ENCODE measurements at regions of chr3 and their contacts with region 1.

Region 1: GRCh38 chr3:49454458-49454857 is 15.6 kb upstream of the DAG1 start:
- DNase-seq: peak in 1 of 2 experiments; percentile 50
- ATAC-seq: peak; percentile 85 to 89
- H3K4me3 ChIP-seq: no peak overlapping the region
- H3K27ac ChIP-seq: peak overlapping the region in 1 of 2 experiments; percentile 8; a peak in 1 of 6 replicates
- H3K4me1 ChIP-seq: peaks cover 15% of the 10 kb centered on the region
- CTCF ChIP-seq: peak; percentile 30; the same call in 1 of the 3 replicates
- EP300 ChIP-seq: no peak
- POLR2A ChIP-seq: no peak
- RAD21 ChIP-seq: peak; percentile 55 to 66

Region 2: GRCh38 chr3:49171119-49171774 is 283.2 kb before region 1 on chr3 and contains the start of gene KLHDC8B:
- CTCF ChIA-PET with region 1: interaction called, 20 read pairs
- POLR2A ChIA-PET with region 1: no interaction called
- DNase-seq: peak; percentile 73 to 76
- ATAC-seq: peak; percentile 83 to 93
- H3K4me3 ChIP-seq: peak within 1 kb of the TSS; percentile 66
- H3K27ac ChIP-seq: peak within 1 kb of the TSS; percentile 81 to 87
- H3K4me1 ChIP-seq: peaks cover 25% of the 10 kb centered on the region
- CTCF ChIP-seq: peak; percentile 85
- EP300 ChIP-seq: no peak
- POLR2A ChIP-seq: peak; percentile 39; the same call in 1 of the 2 replicates
- RAD21 ChIP-seq: peak; percentile 66 to 80
- polyA plus RNA-seq, gene KLHDC8B: 6.7 and 7.4 TPM in 2 replicates

Region 3: GRCh38 chr3:49411968-49412631 is 42.4 kb before region 1 on chr3 and contains the starts of genes RHOA and TCTA:
- CTCF ChIA-PET with region 1: interaction called, 11 read pairs
- POLR2A ChIA-PET with region 1: interaction called, 3 read pairs
- DNase-seq: peak; percentile 95 to 100
- ATAC-seq: peak; percentile 87 to 92
- H3K4me3 ChIP-seq: peak within 1 kb of the TSS; percentile 98
- H3K27ac ChIP-seq: peak within 1 kb of the TSS; percentile 98 to 99
- H3K4me1 ChIP-seq: peaks cover 37% of the 10 kb centered on the region
- CTCF ChIP-seq: no peak
- EP300 ChIP-seq: no peak
- POLR2A ChIP-seq: peak; percentile 89
- RAD21 ChIP-seq: no peak
- polyA plus RNA-seq, gene RHOA: 332 and 343 TPM in 2 replicates
- polyA plus RNA-seq, gene TCTA: 14.8 and 19.9 TPM in 2 replicates

Region 4: GRCh38 chr3:49421890-49422378 is 32.5 kb before region 1 on chr3:
- CTCF ChIA-PET with region 1: interaction called, 11 read pairs
- POLR2A ChIA-PET with region 1: interaction called, 3 read pairs
- DNase-seq: no peak
- ATAC-seq: no peak
- H3K4me3 ChIP-seq: no peak overlapping the region
- H3K27ac ChIP-seq: peak overlapping the region; percentile 73 to 82
- H3K4me1 ChIP-seq: peaks cover 35% of the 10 kb centered on the region
- CTCF ChIP-seq: no peak
- EP300 ChIP-seq: no peak
- POLR2A ChIP-seq: no peak
- RAD21 ChIP-seq: no peak

Region 5: DNA sequence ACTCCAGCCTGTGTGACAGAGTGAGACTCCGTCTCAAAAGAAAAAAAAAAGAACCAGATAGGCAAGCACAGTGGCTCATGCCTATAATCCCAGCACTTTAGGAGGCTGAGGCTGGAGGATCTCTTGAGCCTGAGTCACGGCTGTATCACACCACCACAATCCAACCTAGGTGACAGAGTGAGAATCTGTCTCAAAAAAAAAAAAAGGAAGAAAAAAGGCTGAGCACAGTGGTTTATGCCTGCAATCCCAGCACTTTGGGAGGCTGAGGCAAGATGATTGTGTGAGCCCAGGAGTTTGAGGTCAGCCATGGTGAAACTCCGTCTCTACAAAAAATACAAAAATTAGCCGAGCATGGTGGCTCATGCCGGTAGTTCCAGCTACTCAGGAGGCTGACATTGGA is 19.7 kb before region 1 on chr3:
- CTCF ChIA-PET with region 1: interaction called, 10 read pairs
- POLR2A ChIA-PET with region 1: no interaction called
- DNase-seq: no peak
- ATAC-seq: no peak
- H3K4me3 ChIP-seq: no peak overlapping the region
- H3K27ac ChIP-seq: no peak overlapping the region
- H3K4me1 ChIP-seq: 0 out of 3 replicates have a peak, but pooled peaks cover 3% of the 10 kb centered on the region
- CTCF ChIP-seq: no peak
- EP300 ChIP-seq: no peak
- POLR2A ChIP-seq: no peak
- RAD21 ChIP-seq: no peak